ENCODE measurements at regions of chr3 and their contacts with region 1.

Region 1: GRCh38 chr3:128153156-128154041 is at the start of gene EEFSEC:
- DNase-seq: peak; percentile 90
- H3K4me3 ChIP-seq: peak within 1 kb of the TSS; percentile 82 to 89
- H3K27ac ChIP-seq: peak within 1 kb of the TSS; percentile 76 to 78
- H3K4me1 ChIP-seq: peaks cover 4% of the 10 kb centered on the region in 2 experiments; a peak in 1 of 4 replicates
- H3K27me3 ChIP-seq: no peaks in the 10 kb centered on the region
- CTCF ChIP-seq: no peak
- EP300 ChIP-seq: no peak
- RAD21 ChIP-seq: no peak
- polyA plus RNA-seq, gene EEFSEC: 10.5 and 12.4 TPM in 2 replicates

Region 2: GRCh38 chr3:128123538-128124368 is 29.6 kb before region 1 on chr3 and contains the start of gene RUVBL1:
- CTCF ChIA-PET with region 1: interaction called, 4 read pairs
- POLR2A ChIA-PET with region 1: interaction called, 17 read pairs
- DNase-seq: peak; percentile 96
- H3K4me3 ChIP-seq: peak within 1 kb of the TSS; percentile 98 to 99
- H3K27ac ChIP-seq: peak within 1 kb of the TSS; percentile 82 to 93
- H3K4me1 ChIP-seq: peaks cover 0 to 14% of the 10 kb centered on the region in 2 experiments; a peak in 2 of 4 replicates
- H3K27me3 ChIP-seq: no peaks in the 10 kb centered on the region
- CTCF ChIP-seq: no peak
- EP300 ChIP-seq: no peak
- RAD21 ChIP-seq: no peak
- polyA plus RNA-seq, gene RUVBL1: 140 and 145 TPM in 2 replicates

Region 3: DNA sequence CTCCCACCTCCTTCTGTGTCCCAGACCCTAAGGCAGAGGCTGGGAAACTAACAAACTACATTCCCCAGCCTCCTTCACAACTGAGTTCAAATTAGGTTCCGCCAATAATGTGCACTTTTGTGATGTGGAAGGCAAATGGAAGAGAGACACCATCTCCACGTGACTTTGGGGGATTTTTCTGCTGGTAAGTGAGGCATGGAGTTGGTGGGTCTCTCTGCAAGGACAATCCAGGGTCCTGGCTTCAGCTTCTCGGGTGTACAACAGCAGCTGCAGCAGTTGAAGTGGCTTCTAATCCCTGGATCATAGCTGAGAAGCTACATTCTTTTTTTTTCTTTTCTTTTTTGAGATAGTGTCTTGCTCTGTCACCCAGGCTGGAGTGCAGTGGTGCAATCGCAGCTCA is 398.5 kb after region 1 on chr3:
- CTCF ChIA-PET with region 1: no interaction called
- POLR2A ChIA-PET with region 1: interaction called, 10 read pairs
- DNase-seq: no peak
- H3K4me3 ChIP-seq: no peak overlapping the region
- H3K27ac ChIP-seq: no peak overlapping the region
- H3K4me1 ChIP-seq: peaks cover 17 to 40% of the 10 kb centered on the region in 2 experiments
- H3K27me3 ChIP-seq: no peaks in the 10 kb centered on the region
- CTCF ChIP-seq: no peak
- EP300 ChIP-seq: no peak
- RAD21 ChIP-seq: no peak